ENCODE measurements at regions of chr11 and their contacts with region 1.

Region 1: GRCh38 chr11:63567044-63567840 is 4.1 kb upstream of the PLAAT2 start:
- DNase-seq: peak; percentile 62
- H3K4me3 Mint-ChIP-seq: peak overlapping the region; percentile 17
- H3K27ac Mint-ChIP-seq: peak overlapping the region; percentile 61
- H3K4me1 Mint-ChIP-seq: peaks cover 65% of the 10 kb centered on the region
- H3K27me3 Mint-ChIP-seq: no peaks in the 10 kb centered on the region
- CTCF ChIP-seq: no peak

Region 2: DNA sequence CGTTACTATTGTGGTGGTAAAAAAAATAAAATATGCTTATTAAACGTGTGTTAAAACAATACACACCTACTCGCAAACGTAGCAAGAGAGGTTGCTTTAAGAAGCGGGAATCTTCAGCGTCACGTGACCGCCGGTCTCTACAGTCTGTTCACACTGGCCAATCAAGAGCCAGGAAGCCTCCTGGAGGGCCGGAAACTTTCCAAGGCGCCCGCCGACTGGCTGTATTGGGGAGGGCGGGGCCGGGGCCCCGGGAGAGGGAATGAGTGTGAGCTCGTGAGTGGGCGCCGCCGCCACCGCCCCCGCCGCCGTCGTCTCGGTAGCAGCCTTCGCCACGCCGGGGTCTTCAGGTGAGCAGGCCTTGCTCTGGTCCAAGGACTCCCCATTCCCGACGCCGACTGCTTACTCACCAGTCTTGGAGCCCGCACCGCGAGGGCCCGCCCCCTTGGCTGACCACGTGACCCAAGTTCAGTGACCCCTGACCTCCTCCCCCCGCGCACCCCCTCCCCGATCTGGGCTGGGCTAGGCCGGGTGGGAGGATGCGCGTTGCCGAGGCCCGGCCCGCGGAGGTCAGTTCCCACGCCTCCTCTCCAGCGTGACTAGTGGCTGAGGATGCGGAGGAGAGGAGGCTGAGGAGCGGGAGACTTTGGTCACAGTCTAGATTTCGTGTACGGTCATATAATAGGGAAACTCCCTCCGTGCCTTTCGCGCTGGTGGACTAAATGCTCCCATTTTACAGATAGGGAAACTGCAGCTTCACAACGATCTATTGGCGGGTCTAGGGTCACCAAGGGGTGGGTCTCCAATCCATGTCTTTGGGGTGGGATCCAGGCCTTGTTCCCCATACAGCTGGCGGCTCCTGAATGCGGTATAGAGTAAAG is 795.9 kb before region 1 on chr11 and contains the start of gene TAF6L:
- CTCF ChIA-PET with region 1: no interaction called
- intact Hi-C with region 1: no loop called
- DNase-seq: peak; percentile 92
- H3K4me3 Mint-ChIP-seq: peak within 1 kb of the TSS; percentile 98
- H3K27ac Mint-ChIP-seq: peak within 1 kb of the TSS; percentile 99
- H3K4me1 Mint-ChIP-seq: peaks cover 14% of the 10 kb centered on the region
- H3K27me3 Mint-ChIP-seq: no peaks in the 10 kb centered on the region
- CTCF ChIP-seq: no peak
- total RNA-seq, gene TAF6L: 26.0 and 28.9 TPM in 2 replicates

Region 3: DNA sequence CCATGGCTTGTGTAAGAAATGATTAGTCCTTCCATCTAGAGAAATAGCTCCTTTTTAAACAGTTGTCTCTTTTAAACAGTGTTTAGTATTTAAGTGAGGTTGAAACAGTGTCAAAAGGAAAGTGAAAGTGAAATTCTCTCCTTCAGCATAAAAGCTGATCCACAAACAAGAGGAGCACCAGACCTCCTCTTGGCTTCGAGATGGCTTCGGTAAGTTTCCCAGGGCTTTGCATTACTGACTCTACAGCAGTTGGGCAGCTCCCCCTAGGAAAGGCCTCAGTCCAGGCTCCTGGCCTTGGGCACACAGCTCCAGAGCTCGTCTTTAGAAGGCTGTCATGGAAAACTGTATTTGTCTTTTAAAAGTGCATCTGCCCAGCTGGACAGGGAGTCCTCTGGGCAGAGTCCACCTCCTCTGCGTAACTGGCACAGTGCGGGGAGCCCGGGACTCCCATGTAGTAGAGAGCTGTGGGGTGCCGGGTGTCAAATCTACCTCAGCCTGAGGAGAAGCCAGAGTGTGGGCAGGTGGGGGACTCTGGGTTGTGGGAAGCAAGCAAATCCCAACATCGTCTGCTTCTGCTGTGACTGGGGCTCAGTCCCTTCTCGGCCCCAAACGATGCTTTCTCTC is 30.5 kb before region 1 on chr11 and contains the start of gene PLAAT4:
- CTCF ChIA-PET with region 1: interaction called, 8 read pairs
- intact Hi-C with region 1: loop called (anchors 1 kb)
- DNase-seq: peak; percentile 29
- H3K4me3 Mint-ChIP-seq: peak within 1 kb of the TSS; percentile 71
- H3K27ac Mint-ChIP-seq: peak within 1 kb of the TSS; percentile 37
- H3K4me1 Mint-ChIP-seq: peaks cover 43% of the 10 kb centered on the region
- H3K27me3 Mint-ChIP-seq: no peaks in the 10 kb centered on the region
- CTCF ChIP-seq: no peak
- total RNA-seq, gene PLAAT4: 157 and 269 TPM in 2 replicates

Region 4: GRCh38 chr11:63582935-63583677 is 15.9 kb after region 1 on chr11:
- CTCF ChIA-PET with region 1: interaction called, 8 read pairs
- intact Hi-C with region 1: loop called (anchors 1 kb)
- DNase-seq: no peak
- H3K4me3 Mint-ChIP-seq: no peak overlapping the region
- H3K27ac Mint-ChIP-seq: peak overlapping the region; percentile 86
- H3K4me1 Mint-ChIP-seq: peaks cover 34% of the 10 kb centered on the region
- H3K27me3 Mint-ChIP-seq: no peaks in the 10 kb centered on the region
- CTCF ChIP-seq: no peak

Region 5: GRCh38 chr11:63614136-63614664 is 47.0 kb after region 1 on chr11 and contains the start of gene PLAAT3:
- CTCF ChIA-PET with region 1: no interaction called
- intact Hi-C with region 1: loop called (anchors 5 kb)
- DNase-seq: peak; percentile 88
- H3K4me3 Mint-ChIP-seq: peak within 1 kb of the TSS; percentile 92
- H3K27ac Mint-ChIP-seq: peak within 1 kb of the TSS; percentile 92
- H3K4me1 Mint-ChIP-seq: peaks cover 22% of the 10 kb centered on the region
- H3K27me3 Mint-ChIP-seq: no peaks in the 10 kb centered on the region
- CTCF ChIP-seq: no peak
- total RNA-seq, gene PLAAT3: 261 and 297 TPM in 2 replicates

Region 6: GRCh38 chr11:63829823-63830489 is 262.7 kb after region 1 on chr11:
- CTCF ChIA-PET with region 1: no interaction called
- intact Hi-C with region 1: no loop called
- DNase-seq: peak; percentile 50
- H3K4me3 Mint-ChIP-seq: no peak overlapping the region
- H3K27ac Mint-ChIP-seq: no peak overlapping the region
- H3K4me1 Mint-ChIP-seq: no peaks in the 10 kb centered on the region
- H3K27me3 Mint-ChIP-seq: no peaks in the 10 kb centered on the region
- CTCF ChIP-seq: peak; percentile 27

Measured in Calu3 (cell line).